ENCODE measurements at regions of chr20 and their contacts with region 1.

Region 1: DNA sequence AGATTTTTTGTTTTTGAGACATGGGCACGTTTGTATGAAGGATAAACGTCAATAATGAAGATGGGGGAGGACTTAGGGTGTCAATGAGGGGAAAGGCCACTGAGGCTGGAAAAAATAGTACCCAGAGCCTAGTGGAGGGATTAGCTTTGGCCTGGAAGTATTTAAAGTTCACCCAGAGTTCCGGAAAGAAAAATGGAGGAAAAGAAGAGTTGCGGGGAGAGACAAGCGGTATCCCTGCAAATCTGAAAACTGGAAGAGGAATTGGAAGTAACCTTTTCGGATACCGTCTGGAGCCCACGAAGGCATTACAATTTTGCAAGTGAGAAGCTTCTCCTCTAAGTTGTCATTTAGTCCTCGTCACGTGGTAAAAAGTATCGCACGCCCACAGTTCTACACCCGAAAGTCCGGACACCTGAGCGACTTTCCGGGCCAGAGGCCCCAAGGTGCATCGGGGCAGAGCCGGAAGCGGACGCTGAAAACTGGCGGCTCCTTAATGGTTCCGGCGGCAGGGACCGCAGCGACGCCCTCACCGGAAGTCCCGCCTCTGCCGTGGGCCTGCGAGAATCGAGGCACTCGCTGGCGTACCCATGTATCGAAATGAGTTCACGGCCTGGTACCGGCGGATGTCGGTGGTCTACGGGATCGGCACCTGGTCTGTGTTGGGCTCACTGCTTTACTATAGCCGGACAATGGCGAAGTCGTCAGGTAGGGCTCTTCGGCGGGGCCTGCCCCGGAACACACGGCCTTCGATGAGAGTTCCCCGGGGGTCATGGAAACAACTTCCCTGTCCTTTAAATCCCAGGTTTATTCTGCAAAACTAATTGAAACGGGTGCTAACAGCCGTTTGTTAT is at the start of gene SMIM26:
- DNase-seq: peak; percentile 85 to 94 (median 92)
- ATAC-seq: peak; percentile 99
- H3K4me3 ChIP-seq: peak within 1 kb of the TSS; percentile 76
- H3K4me3 Mint-ChIP-seq: peak within 1 kb of the TSS; percentile 93 to 99 (median 96)
- H3K27ac ChIP-seq: peak within 1 kb of the TSS; percentile 95
- H3K27ac Mint-ChIP-seq: peak within 1 kb of the TSS; percentile 92 to 100 (median 99)
- H3K4me1 ChIP-seq: peaks cover 4 to 15% of the 10 kb centered on the region in 2 donors
- H3K4me1 Mint-ChIP-seq: peaks cover 14 to 25% (median 22%) of the 10 kb centered on the region in 7 donors
- H3K27me3 ChIP-seq: no peaks in the 10 kb centered on the region
- H3K27me3 Mint-ChIP-seq: no peaks in the 10 kb centered on the region
- total RNA-seq, gene SMIM26: 51.2 to 78.4 (median 69.5) TPM

Region 2: GRCh38 chr20:16573001-16573965 is 1993.8 kb before region 1 on chr20 and contains the start of gene KIF16B:
- CTCF ChIA-PET with region 1: no interaction called
- POLR2A ChIA-PET with region 1: no interaction called
- intact Hi-C with region 1: loop called in 1 of 2 experiments (anchors 5 kb)
- DNase-seq: peak; percentile 62 to 97 (median 76)
- ATAC-seq: peak; percentile 88
- H3K4me3 ChIP-seq: peak within 1 kb of the TSS; percentile 78
- H3K4me3 Mint-ChIP-seq: peak within 1 kb of the TSS; percentile 88 to 97 (median 92)
- H3K27ac ChIP-seq: peak within 1 kb of the TSS; percentile 61
- H3K27ac Mint-ChIP-seq: peak within 1 kb of the TSS; percentile 52 to 90 (median 85)
- H3K4me1 ChIP-seq: peaks cover 9 to 11% of the 10 kb centered on the region in 2 donors
- H3K4me1 Mint-ChIP-seq: peaks cover 16 to 61% (median 50%) of the 10 kb centered on the region in 7 donors
- H3K27me3 ChIP-seq: no peaks in the 10 kb centered on the region
- H3K27me3 Mint-ChIP-seq: peaks cover 0 to 8% (median 0%) of the 10 kb centered on the region in 5 donors
- total RNA-seq, gene KIF16B: 8.4 to 13.7 (median 11.0) TPM

Region 3: GRCh38 chr20:17569616-17570346 is 997.3 kb before region 1 on chr20 and contains the start of gene DSTN:
- CTCF ChIA-PET with region 1: no interaction called
- POLR2A ChIA-PET with region 1: no interaction called
- intact Hi-C with region 1: loop called in 1 of 2 experiments (anchors 10 kb)
- DNase-seq: peak; percentile 83 to 91 (median 89)
- ATAC-seq: peak; percentile 95
- H3K4me3 ChIP-seq: peak within 1 kb of the TSS; percentile 94
- H3K4me3 Mint-ChIP-seq: peak within 1 kb of the TSS; percentile 82 to 97 (median 95)
- H3K27ac ChIP-seq: peak within 1 kb of the TSS; percentile 85
- H3K27ac Mint-ChIP-seq: peak within 1 kb of the TSS; percentile 80 to 96 (median 91)
- H3K4me1 ChIP-seq: peaks cover 5 to 11% of the 10 kb centered on the region in 2 donors
- H3K4me1 Mint-ChIP-seq: peaks cover 17 to 44% (median 31%) of the 10 kb centered on the region in 7 donors
- H3K27me3 ChIP-seq: no peaks in the 10 kb centered on the region
- H3K27me3 Mint-ChIP-seq: peaks cover 0 to 14% (median 0%) of the 10 kb centered on the region in 5 donors
- total RNA-seq, gene DSTN: 28.7 to 63.6 (median 33.9) TPM

Region 4: GRCh38 chr20:18412221-18412901 is 154.8 kb before region 1 on chr20:
- CTCF ChIA-PET with region 1: no interaction called
- POLR2A ChIA-PET with region 1: no interaction called
- intact Hi-C with region 1: loop called in 1 of 2 experiments (anchors 1 kb)
- DNase-seq: no peak
- ATAC-seq: peak; percentile 33
- H3K4me3 ChIP-seq: no peak overlapping the region
- H3K4me3 Mint-ChIP-seq: no peak overlapping the region
- H3K27ac ChIP-seq: no peak overlapping the region
- H3K27ac Mint-ChIP-seq: no peak overlapping the region
- H3K4me1 ChIP-seq: no peaks in the 10 kb centered on the region
- H3K4me1 Mint-ChIP-seq: peaks cover 0 to 7% (median 3%) of the 10 kb centered on the region in 7 donors
- H3K27me3 ChIP-seq: no peaks in the 10 kb centered on the region
- H3K27me3 Mint-ChIP-seq: no peaks in the 10 kb centered on the region

Region 5: GRCh38 chr20:18427214-18427613 is 139.9 kb before region 1 on chr20:
- CTCF ChIA-PET with region 1: no interaction called
- POLR2A ChIA-PET with region 1: no interaction called
- intact Hi-C with region 1: no loop called
- DNase-seq: no peak
- ATAC-seq: no peak
- H3K4me3 ChIP-seq: no peak overlapping the region
- H3K4me3 Mint-ChIP-seq: no peak overlapping the region
- H3K27ac ChIP-seq: no peak overlapping the region
- H3K27ac Mint-ChIP-seq: no peak overlapping the region
- H3K4me1 ChIP-seq: no peaks in the 10 kb centered on the region
- H3K4me1 Mint-ChIP-seq: no peaks in the 10 kb centered on the region
- H3K27me3 ChIP-seq: no peaks in the 10 kb centered on the region
- H3K27me3 Mint-ChIP-seq: no peaks in the 10 kb centered on the region

Region 6: GRCh38 chr20:18496740-18497592 is 70.2 kb before region 1 on chr20 and contains the start of gene RBBP9:
- CTCF ChIA-PET with region 1: no interaction called
- POLR2A ChIA-PET with region 1: interaction called, 5 read pairs
- intact Hi-C with region 1: loop called in 1 of 2 experiments (anchors 2 kb)
- DNase-seq: peak; percentile 58 to 77 (median 68)
- ATAC-seq: peak; percentile 98
- H3K4me3 ChIP-seq: peak within 1 kb of the TSS; percentile 98
- H3K4me3 Mint-ChIP-seq: peak within 1 kb of the TSS; percentile 92 to 99 (median 96)
- H3K27ac ChIP-seq: peak within 1 kb of the TSS; percentile 91
- H3K27ac Mint-ChIP-seq: peak within 1 kb of the TSS; percentile 62 to 96 (median 94)
- H3K4me1 ChIP-seq: peaks cover 5 to 7% of the 10 kb centered on the region in 2 donors
- H3K4me1 Mint-ChIP-seq: peaks cover 10 to 25% (median 22%) of the 10 kb centered on the region in 7 donors
- H3K27me3 ChIP-seq: no peaks in the 10 kb centered on the region
- H3K27me3 Mint-ChIP-seq: peaks cover 0 to 3% (median 3%) of the 10 kb centered on the region in 5 donors
- total RNA-seq, gene RBBP9: 4.9 to 16.4 (median 6.1) TPM

Region 7: DNA sequence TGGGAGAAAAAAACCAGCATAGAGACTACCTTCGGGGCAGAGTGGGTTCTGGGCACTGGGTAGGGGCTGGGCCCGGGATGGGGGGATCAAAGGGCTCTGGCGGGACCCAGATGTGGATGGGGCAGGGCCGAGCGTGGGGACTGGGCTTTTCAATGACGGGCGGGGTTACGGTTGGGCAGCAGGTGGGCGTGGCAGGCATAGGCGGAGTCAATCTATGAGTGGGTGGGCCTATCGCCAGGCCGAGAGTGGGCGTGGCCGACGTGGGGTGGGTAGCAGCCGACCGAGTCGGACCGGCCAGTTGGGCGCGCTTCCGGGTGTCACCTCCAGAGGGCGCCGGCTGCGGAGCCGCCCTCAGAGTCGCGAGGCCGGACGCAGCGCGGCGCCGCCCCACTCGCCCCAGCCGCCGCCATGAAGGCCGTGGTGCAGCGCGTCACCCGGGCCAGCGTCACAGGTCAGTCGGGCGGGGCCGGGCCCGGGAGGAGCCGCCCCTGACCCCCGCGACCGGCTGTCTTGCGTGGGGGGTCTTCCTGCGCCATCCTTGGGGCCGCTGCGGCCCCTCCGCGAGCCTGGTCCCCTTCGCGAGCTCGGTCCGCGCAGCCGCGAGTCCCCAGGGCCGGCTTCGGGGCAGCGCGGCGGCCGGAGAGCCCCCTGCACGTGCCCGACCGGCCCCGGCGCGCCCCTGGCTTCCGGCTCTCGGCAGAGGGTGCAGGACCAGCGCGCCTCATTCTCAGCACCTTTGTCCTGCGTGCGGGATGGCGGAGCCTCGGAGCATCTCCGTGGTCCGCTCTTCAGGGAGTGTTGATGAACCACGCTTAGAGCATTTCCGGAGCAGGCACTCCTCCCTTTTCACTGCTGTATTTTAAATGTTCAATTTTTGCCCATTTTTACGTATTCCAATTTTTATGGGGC is 20.8 kb after region 1 on chr20 and contains the start of gene DTD1:
- CTCF ChIA-PET with region 1: no interaction called
- POLR2A ChIA-PET with region 1: interaction called, 8 read pairs
- intact Hi-C with region 1: loop called (anchors 1 kb)
- DNase-seq: peak; percentile 29 to 93 (median 53)
- ATAC-seq: peak; percentile 92
- H3K4me3 ChIP-seq: peak within 1 kb of the TSS; percentile 68
- H3K4me3 Mint-ChIP-seq: peak within 1 kb of the TSS; percentile 83 to 99 (median 91)
- H3K27ac ChIP-seq: peak within 1 kb of the TSS; percentile 74
- H3K27ac Mint-ChIP-seq: peak within 1 kb of the TSS; percentile 80 to 94 (median 91)
- H3K4me1 ChIP-seq: peaks cover 0 to 4% of the 10 kb centered on the region in 2 donors
- H3K4me1 Mint-ChIP-seq: peaks cover 16 to 39% (median 27%) of the 10 kb centered on the region in 7 donors
- H3K27me3 ChIP-seq: no peaks in the 10 kb centered on the region
- H3K27me3 Mint-ChIP-seq: peaks cover 0 to 11% (median 9%) of the 10 kb centered on the region in 5 donors
- total RNA-seq, gene DTD1: 12.7 to 24.4 (median 16.6) TPM

Region 8: DNA sequence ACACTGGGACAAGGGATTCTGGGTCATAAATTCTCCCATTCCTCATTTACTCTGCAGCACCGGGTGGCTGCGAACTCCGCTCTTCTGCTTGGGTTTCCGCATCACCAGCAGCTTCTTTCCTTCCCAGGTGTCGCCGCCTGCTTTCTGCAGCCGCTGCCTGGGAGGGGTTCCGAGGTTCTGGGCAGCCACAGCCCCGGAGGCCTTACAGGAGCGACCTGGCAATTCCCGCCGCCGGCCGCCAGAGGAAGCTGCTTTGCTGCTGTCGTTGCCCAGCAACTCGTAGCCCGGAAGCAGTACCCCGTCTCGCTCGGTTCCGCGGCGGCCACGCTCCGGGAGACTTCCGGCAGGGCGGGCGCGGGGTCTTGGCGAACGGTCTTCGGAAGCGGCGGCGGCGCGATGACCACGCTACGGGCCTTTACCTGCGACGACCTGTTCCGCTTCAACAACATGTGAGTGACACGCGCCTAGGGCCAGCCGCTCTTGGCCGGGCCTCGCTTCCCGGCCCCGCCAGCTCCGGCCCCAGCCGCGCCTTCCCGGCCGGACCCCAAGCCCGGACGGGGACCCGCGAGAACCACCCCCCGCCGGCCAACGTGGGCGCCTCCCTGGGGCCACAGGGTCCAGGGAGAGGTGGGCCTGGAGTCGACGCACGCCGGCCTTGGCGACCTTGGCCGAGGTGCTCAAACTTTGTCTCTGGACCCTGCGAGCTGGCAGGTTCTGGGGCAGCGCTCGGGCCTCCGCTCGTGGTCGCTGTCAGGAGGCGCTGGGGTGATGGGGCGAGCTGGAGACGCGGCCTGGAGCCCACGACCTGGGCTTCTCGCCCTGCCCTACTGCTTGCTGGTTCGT is 1450.1 kb after region 1 on chr20 and contains the start of gene NAA20:
- CTCF ChIA-PET with region 1: no interaction called
- POLR2A ChIA-PET with region 1: no interaction called
- intact Hi-C with region 1: loop called in 1 of 2 experiments (anchors 2 kb)
- DNase-seq: peak; percentile 80 to 89 (median 87)
- ATAC-seq: peak; percentile 99
- H3K4me3 ChIP-seq: peak within 1 kb of the TSS; percentile 77
- H3K4me3 Mint-ChIP-seq: peak within 1 kb of the TSS; percentile 88 to 96 (median 93)
- H3K27ac ChIP-seq: peak within 1 kb of the TSS; percentile 83
- H3K27ac Mint-ChIP-seq: peak within 1 kb of the TSS; percentile 90 to 96 (median 94)
- H3K4me1 ChIP-seq: peaks cover 9 to 28% of the 10 kb centered on the region in 2 donors
- H3K4me1 Mint-ChIP-seq: peaks cover 38 to 68% (median 63%) of the 10 kb centered on the region in 7 donors
- H3K27me3 ChIP-seq: no peaks in the 10 kb centered on the region
- H3K27me3 Mint-ChIP-seq: no peaks in the 10 kb centered on the region
- total RNA-seq, gene NAA20: 21.5 to 52.6 (median 28.3) TPM